ENCODE measurements at regions of chr5 and their contacts with region 1.

Region 1: GRCh38 chr5:18675041-18675440 is 1040.8 kb downstream of the TAF11L14 start:
- DNase-seq: no peak
- H3K4me3 ChIP-seq: no peak overlapping the region
- H3K27ac ChIP-seq: no peak overlapping the region
- H3K4me1 ChIP-seq: no peaks in the 10 kb centered on the region
- CTCF ChIP-seq: no peak

Region 2: DNA sequence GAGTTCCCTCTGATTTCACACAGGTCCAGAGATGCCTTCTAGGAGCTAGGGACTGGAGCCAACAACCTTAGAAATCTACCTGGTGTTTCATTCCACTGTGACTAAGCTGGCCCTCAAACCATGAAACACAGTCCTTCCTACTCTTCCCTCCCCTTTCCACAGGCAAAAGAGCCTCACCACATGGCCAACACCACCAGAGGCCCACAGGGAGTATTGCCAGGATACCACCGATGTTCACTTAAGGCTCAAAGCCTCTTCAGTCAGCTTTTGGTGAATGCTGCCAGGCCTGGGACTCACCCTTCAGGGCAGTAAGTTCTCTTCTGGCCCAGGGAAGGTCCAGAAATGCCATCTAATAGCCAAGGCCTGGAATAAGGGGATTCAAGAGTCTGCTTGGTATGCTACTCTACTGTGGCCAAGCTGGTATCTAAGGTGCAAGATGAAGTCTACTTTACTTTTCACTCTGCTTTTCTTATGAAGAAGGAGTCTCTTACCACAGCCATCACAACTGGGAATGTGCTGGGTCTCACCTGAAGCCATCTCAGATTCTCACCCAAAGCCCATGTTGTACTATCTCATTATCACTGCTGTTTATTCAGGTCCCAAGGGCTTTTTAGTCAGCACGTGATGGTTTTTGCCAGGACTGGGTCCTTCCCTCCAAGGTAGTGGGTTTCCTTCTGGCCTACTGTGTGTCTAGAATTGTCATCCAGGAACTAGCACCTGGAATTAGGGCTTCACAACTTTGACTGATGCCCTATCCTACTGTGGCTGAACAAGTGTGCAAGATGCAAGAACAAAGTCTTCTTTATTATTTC is 22.4 kb before region 1 on chr5:
- CTCF ChIA-PET with region 1: no interaction called
- POLR2A ChIA-PET with region 1: no interaction called
- intact Hi-C with region 1: loop called (anchors 2 kb)
- DNase-seq: no peak
- H3K4me3 ChIP-seq: no peak overlapping the region
- H3K27ac ChIP-seq: no peak overlapping the region
- H3K4me1 ChIP-seq: no peaks in the 10 kb centered on the region
- CTCF ChIP-seq: no peak

Region 3: DNA sequence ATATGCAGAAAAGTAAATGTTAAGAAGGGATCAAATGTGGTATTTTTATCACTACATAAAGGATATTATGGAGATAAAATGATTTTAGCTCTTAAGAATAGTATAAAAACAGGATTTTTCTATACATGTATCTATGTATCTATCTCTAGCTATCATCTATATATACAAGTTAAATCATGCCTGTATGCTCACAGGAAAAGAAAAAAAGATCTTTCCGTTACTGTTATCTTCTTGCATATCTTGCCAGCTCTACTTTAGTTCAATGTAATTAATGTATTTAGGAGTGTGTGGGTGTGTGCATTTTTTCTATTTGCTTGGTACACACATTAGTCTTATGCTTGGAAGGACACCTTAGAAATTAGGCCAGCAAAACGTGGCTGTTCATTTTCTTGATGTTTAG is 162.4 kb after region 1 on chr5:
- CTCF ChIA-PET with region 1: no interaction called
- POLR2A ChIA-PET with region 1: no interaction called
- intact Hi-C with region 1: no loop called
- DNase-seq: no peak
- H3K4me3 ChIP-seq: no peak overlapping the region
- H3K27ac ChIP-seq: no peak overlapping the region
- H3K4me1 ChIP-seq: no peaks in the 10 kb centered on the region
- CTCF ChIP-seq: no peak

Measured in OCI-LY7 (cell line).